Activated CD4-positive, alpha-beta T cell treated with anti-CD3 and anti-CD28 coated beads for 36 hours (primary cell): ENCODE measurements at regions of chr2 and their contacts with region 1.

Region 1: GRCh38 chr2:85865539-85866164 is 23.1 kb downstream of the ST3GAL5 start:
- DNase-seq: peak; percentile 61
- ATAC-seq: peak; percentile 89
- H3K4me3 Mint-ChIP-seq: no peak overlapping the region
- H3K27ac Mint-ChIP-seq: no peak overlapping the region
- H3K4me1 Mint-ChIP-seq: peaks cover 54% of the 10 kb centered on the region
- H3K27me3 Mint-ChIP-seq: no peaks in the 10 kb centered on the region

Region 2: GRCh38 chr2:85852937-85853498 is 12.6 kb before region 1 on chr2:
- CTCF ChIA-PET with region 1: interaction called, 8 read pairs
- POLR2A ChIA-PET with region 1: interaction called, 3 read pairs
- intact Hi-C with region 1: loop called in 1 of 2 experiments (anchors 1 kb)
- DNase-seq: peak; percentile 73
- ATAC-seq: peak; percentile 79
- H3K4me3 Mint-ChIP-seq: peak overlapping the region; percentile 71
- H3K27ac Mint-ChIP-seq: peak overlapping the region; percentile 99
- H3K4me1 Mint-ChIP-seq: peaks cover 51% of the 10 kb centered on the region
- H3K27me3 Mint-ChIP-seq: no peaks in the 10 kb centered on the region

Region 3: DNA sequence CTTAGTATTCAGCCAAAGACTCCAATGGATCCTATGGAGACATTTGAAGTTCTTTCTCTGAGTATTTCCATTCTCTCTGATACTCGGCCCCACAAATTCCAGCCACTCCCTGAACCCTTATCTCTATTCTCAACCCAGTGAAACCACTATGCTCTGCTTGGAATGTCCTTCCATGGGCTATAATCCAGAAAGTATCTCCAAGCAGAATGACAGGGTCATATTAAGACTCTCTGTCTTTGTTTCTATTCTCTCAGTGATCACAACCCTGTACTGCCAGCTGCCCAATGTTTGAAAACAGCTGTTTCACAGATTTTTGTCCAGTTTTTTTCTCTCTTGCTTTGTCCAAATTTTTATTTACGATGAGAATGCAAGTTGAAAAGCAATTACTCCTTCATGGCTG is 675.7 kb after region 1 on chr2:
- CTCF ChIA-PET with region 1: no interaction called
- POLR2A ChIA-PET with region 1: no interaction called
- intact Hi-C with region 1: loop called in 1 of 2 experiments (anchors 5 kb)
- DNase-seq: no peak
- ATAC-seq: no peak
- H3K4me3 Mint-ChIP-seq: no peak overlapping the region
- H3K27ac Mint-ChIP-seq: no peak overlapping the region
- H3K4me1 Mint-ChIP-seq: peaks cover 15% of the 10 kb centered on the region
- H3K27me3 Mint-ChIP-seq: no peaks in the 10 kb centered on the region